Naive thymus-derived CD4-positive, alpha-beta T cell (primary cell): ENCODE measurements at regions of chr17 and their contacts with region 1.

Region 1: DNA sequence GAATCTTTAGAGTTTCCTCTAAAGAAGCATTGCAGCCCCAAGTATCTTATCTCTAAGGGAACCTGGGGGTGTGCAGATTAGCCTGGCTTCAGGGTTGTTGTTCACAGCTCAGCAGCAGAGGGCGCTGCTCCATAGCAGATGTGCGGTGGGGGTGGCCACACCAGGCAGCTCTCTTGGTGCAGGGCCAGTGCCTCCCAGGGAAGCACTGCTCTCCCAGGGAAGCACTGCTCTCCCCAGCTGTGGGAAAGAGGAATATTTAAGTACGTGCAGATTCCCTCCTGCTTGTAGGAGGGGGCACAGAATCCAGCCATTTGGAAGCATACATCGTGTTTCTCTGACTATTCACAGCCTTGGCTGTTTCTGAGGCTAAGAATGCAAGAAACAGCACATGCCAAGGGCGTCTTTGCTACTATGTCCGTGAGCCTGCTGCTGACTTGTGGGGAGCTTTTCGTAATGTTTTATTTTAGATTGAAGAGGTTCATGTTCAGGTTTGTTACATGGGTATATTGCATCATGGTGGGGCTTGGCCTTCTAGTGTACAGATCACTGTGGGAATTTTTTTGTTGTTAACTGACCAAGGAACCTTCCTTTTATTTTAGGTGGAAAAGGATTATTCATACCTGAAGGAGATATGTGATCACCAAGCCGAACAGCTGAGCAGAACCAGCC is 217.8 kb downstream of the SPECC1 start:
- DNase-seq: peak; percentile 68 to 87 (median 79)
- ATAC-seq: peak; percentile 100
- H3K4me3 ChIP-seq: no peak overlapping the region
- H3K4me3 Mint-ChIP-seq: peak overlapping the region in 6 of 10 donors; percentile 3 to 61 (median 29)
- H3K27ac ChIP-seq: no peak overlapping the region
- H3K27ac Mint-ChIP-seq: peak overlapping the region in 5 of 9 donors; percentile 2 to 81 (median 50)
- H3K4me1 ChIP-seq: peaks cover 0 to 9% of the 10 kb centered on the region in 2 donors
- H3K4me1 Mint-ChIP-seq: peaks cover 19 to 49% (median 35%) of the 10 kb centered on the region in 7 donors
- H3K27me3 ChIP-seq: no peaks in the 10 kb centered on the region
- H3K27me3 Mint-ChIP-seq: peaks cover 0 to 6% (median 0%) of the 10 kb centered on the region in 5 donors

Region 2: DNA sequence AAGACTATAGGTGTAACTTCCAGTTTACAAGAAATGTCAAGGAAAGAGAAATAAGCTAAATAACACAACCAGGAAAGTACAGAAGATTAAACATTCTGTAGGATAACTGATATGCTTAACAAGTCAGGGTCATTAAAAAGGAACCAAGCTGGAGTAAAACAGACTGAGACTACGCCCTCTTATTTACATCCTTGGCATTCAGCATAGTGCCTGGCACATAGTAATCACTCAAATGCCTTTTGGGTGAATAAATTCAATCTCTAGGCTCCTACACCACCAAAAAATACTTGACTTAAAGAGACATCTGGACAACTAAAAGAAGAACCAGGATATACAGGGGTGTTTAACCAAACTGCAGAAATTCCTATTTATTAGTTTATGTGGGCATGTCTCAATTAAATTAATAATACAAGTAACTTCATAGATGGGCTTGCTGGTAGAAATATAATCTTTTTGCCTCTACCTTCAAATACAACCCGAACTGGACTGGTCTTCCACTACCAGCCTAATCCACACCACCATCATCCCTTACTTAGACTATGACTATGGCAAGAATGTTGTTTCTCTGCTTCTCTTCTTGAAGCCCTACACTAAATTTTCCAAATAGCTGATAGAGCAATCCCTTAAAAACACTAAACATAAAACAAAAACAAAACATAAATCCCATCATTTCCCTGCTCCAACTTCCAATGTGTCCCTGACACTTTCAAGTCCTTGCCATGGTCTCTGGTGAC is 311.5 kb before region 1 on chr17:
- CTCF ChIA-PET with region 1: no interaction called
- POLR2A ChIA-PET with region 1: no interaction called
- intact Hi-C with region 1: no loop called
- DNase-seq: no peak
- ATAC-seq: no peak
- H3K4me3 ChIP-seq: no peak overlapping the region
- H3K4me3 Mint-ChIP-seq: no peak overlapping the region
- H3K27ac ChIP-seq: no peak overlapping the region
- H3K27ac Mint-ChIP-seq: peak overlapping the region in 5 of 9 donors; percentile 10 to 48 (median 28)
- H3K4me1 ChIP-seq: no peaks in the 10 kb centered on the region
- H3K4me1 Mint-ChIP-seq: peaks cover 2 to 18% (median 14%) of the 10 kb centered on the region in 7 donors
- H3K27me3 ChIP-seq: no peaks in the 10 kb centered on the region
- H3K27me3 Mint-ChIP-seq: no peaks in the 10 kb centered on the region

Region 3: DNA sequence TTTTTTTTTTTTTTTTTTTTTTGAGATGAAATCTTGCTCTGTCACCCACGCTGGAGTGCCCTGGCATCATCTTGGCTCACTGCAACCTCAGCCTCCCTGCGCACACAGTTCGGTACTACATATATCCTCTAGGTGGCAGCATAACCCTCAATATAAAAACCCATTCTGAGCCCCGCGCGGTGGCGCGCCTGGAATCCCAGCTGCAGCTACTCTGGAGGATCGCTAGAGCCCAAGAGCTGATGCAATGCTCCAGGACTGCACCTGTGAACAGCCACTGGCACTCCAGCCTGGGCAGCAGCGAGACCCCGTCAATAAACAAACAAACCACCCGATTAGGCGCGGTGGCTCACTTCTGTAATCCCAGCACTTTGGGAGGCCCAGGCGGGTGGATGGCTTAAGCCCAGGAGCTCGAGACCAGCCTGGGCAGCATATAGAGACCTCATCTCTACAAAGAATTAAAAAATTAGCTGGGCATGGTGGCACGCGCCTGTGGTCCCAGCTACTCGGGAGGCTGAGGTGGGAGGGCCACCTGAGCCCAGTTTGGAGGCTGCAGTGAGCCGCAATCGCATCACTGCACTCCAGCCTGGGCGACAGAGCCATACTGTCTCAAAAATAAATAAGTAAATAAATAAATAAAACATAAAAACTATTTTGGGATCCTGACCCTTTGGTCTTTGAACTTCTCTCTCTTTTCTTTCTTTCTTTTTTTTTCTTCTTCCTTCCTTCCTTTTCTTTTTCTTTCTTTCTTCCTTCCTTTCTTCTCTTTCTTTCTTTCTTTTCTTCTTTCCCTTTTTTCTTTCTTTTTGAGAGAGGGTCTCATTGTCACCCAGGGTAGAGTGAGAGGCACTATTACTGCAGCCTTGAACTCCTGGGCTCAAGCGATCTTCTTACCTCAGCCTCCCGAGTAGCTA is 233.9 kb before region 1 on chr17:
- CTCF ChIA-PET with region 1: interaction called, 3 read pairs
- POLR2A ChIA-PET with region 1: no interaction called
- intact Hi-C with region 1: loop called in 1 of 2 experiments (anchors 2 kb)
- DNase-seq: peak; percentile 52 to 79 (median 74)
- ATAC-seq: peak; percentile 100
- H3K4me3 ChIP-seq: no peak overlapping the region
- H3K4me3 Mint-ChIP-seq: peak overlapping the region in 7 of 10 donors; percentile 23 to 62 (median 56)
- H3K27ac ChIP-seq: no peak overlapping the region
- H3K27ac Mint-ChIP-seq: peak overlapping the region in 2 of 9 donors; percentile 14 to 36
- H3K4me1 ChIP-seq: no peaks in the 10 kb centered on the region
- H3K4me1 Mint-ChIP-seq: peaks cover 0 to 11% (median 9%) of the 10 kb centered on the region in 7 donors
- H3K27me3 ChIP-seq: no peaks in the 10 kb centered on the region
- H3K27me3 Mint-ChIP-seq: peaks cover 0 to 22% (median 15%) of the 10 kb centered on the region in 5 donors

Region 4: DNA sequence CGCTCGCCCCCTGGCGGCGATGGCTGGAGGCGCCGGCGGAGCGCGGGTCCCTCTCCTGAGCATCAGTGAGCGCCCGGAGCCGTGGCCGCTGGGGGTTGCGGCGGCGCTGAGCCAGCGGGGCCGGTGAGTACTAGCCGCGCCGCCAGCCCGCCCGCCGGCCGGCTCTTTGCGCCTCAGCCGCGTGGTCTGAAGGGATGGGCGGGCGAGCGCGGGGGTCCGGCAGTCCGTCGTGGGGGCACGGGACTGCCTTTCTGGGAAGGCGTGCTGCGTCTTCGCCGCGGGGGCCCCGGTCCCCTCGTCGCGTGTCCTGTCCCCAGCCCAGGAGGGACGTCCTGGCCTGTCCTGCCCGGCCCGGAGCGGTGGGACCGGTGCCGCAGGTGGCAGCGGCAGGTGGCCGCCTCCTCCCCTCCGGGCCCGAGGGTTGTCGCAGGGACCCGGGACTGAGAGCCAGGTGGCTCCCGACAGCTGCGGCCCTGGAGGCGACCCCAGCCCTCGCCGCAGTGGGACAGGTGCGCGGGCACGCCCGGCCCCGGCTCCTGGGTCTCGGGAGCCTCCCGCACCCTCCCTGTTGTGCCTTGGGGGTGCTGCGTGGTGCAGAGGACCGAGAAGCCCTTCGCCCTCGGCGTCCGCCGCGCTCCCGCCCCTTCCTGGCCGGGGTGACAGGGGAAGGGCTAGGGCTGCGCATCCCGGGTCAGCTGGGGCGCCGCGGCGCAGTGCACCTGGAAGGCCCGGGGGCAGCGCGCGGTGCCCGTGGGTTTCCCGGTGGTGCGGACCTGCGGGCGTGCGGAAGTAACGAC is 217.4 kb before region 1 on chr17 and contains the start of gene SPECC1:
- CTCF ChIA-PET with region 1: interaction called, 3 read pairs
- POLR2A ChIA-PET with region 1: no interaction called
- intact Hi-C with region 1: loop called in 1 of 2 experiments (anchors 10 kb)
- DNase-seq: peak in 8 of 9 donors; percentile 7 to 95 (median 87)
- ATAC-seq: peak; percentile 100
- H3K4me3 ChIP-seq: peak within 1 kb of the TSS; percentile 85
- H3K4me3 Mint-ChIP-seq: peak within 1 kb of the TSS; percentile 86 to 97 (median 90)
- H3K27ac ChIP-seq: no peak within 1 kb of the TSS
- H3K27ac Mint-ChIP-seq: peak within 1 kb of the TSS in 5 of 9 donors; percentile 25 to 58 (median 44)
- H3K4me1 ChIP-seq: no peaks in the 10 kb centered on the region
- H3K4me1 Mint-ChIP-seq: peaks cover 6 to 17% (median 14%) of the 10 kb centered on the region in 7 donors
- H3K27me3 ChIP-seq: peaks cover 0 to 3% of the 10 kb centered on the region in 2 donors
- H3K27me3 Mint-ChIP-seq: peaks cover 60 to 72% (median 69%) of the 10 kb centered on the region in 5 donors
- total RNA-seq, gene SPECC1: 1.2 to 37.5 (median 5.7) TPM

Region 5: DNA sequence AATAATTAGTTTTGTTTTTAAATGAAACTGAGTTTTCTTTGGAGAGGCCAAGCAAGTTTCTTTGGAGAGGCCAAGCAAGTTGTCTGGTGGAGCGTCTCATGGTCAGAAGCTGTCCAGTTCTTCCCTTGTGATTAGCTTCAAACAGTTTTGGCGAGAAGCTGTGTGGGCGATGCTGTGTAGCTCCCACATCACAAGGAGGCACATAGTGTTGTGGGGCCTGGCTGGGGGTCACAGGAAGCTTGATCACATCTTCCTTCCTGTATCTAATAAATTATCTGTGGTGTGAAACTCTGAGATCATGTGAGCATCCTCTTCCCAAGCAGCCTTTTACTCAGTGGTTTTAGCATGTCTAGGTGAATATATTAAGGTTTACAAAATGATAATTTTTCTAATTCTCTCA is 183.9 kb before region 1 on chr17:
- CTCF ChIA-PET with region 1: no interaction called
- POLR2A ChIA-PET with region 1: no interaction called
- intact Hi-C with region 1: no loop called
- DNase-seq: no peak
- ATAC-seq: peak; percentile 54
- H3K4me3 ChIP-seq: no peak overlapping the region
- H3K4me3 Mint-ChIP-seq: no peak overlapping the region
- H3K27ac ChIP-seq: no peak overlapping the region
- H3K27ac Mint-ChIP-seq: no peak overlapping the region
- H3K4me1 ChIP-seq: peaks cover 0 to 20% of the 10 kb centered on the region in 2 donors
- H3K4me1 Mint-ChIP-seq: peaks cover 0 to 14% (median 0%) of the 10 kb centered on the region in 7 donors
- H3K27me3 ChIP-seq: no peaks in the 10 kb centered on the region
- H3K27me3 Mint-ChIP-seq: peaks cover 0 to 21% (median 12%) of the 10 kb centered on the region in 5 donors

Region 6: DNA sequence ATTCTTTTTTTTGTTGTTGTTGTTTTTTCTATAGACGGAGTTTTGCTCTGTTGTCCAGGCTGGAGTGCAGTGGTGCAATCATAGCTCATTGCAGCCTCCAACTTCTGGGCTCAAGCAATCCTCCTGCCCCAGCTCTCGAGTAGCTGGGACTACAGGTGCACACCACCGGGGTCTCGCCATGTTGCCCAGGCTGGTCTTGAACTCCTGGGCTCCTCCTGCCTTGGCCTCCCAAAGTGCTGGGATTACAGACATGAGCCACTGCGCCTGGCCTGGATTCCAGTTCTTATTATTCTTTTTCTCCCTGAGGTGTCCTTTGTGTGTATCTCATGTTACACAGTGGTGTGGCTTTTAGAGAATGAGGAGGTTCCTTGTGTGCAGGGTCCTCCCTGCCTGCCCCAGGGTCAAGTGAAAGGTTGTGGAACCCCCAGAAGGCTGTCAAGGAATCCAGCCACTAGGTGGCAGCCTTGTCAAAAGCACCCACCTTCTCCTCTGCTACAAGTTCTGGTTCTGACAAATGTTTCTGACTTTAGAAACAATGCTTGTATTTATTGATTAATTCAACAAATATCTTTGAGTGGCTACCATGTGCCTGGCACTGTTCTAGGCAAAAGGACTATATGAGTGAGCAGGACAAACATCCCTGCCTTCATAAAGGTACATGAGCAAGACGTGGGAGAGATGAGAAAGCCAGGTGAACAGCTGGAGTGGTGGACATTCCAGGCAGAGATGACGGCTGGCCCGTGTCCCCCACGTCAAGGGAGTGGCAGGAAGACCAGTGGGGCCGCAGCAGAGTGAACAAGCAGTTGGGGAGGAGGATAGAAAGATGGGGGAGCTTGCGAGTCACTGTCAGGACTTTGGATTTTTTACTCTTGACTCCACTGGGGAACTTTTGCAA is 105.3 kb before region 1 on chr17:
- CTCF ChIA-PET with region 1: interaction called, 22 read pairs
- POLR2A ChIA-PET with region 1: no interaction called
- intact Hi-C with region 1: loop called (anchors 1 kb)
- DNase-seq: peak; percentile 42 to 71 (median 64)
- ATAC-seq: peak; percentile 80
- H3K4me3 ChIP-seq: no peak overlapping the region
- H3K4me3 Mint-ChIP-seq: no peak overlapping the region
- H3K27ac ChIP-seq: no peak overlapping the region
- H3K27ac Mint-ChIP-seq: no peak overlapping the region
- H3K4me1 ChIP-seq: no peaks in the 10 kb centered on the region
- H3K4me1 Mint-ChIP-seq: peaks cover 0 to 3% (median 0%) of the 10 kb centered on the region in 7 donors
- H3K27me3 ChIP-seq: no peaks in the 10 kb centered on the region
- H3K27me3 Mint-ChIP-seq: peaks cover 0 to 18% (median 0%) of the 10 kb centered on the region in 5 donors

Region 7: DNA sequence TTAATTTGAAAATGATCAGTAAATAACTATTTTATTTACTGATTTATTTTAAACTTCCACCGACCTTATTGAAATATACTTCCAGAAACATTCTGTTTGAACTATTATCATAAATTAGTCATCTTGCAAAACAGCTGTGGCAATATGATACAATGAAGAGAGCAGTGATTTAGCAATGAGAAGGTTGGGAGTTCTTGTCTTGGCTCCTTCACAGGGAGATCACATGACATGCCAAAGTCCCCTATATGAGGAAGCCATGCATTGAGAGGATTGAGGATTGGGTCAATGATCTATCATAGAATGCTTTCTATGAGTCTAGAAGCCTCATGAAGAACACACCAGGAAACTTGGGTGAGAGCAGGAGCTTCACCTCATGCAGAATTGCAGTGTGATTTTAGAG is 17.7 kb after region 1 on chr17:
- CTCF ChIA-PET with region 1: interaction called, 39 read pairs
- POLR2A ChIA-PET with region 1: interaction called, 3 read pairs
- intact Hi-C with region 1: no loop called
- DNase-seq: no peak
- ATAC-seq: no peak
- H3K4me3 ChIP-seq: no peak overlapping the region
- H3K4me3 Mint-ChIP-seq: peak overlapping the region in 1 of 10 donors; percentile 30
- H3K27ac ChIP-seq: no peak overlapping the region
- H3K27ac Mint-ChIP-seq: peak overlapping the region in 2 of 9 donors; percentile 17 to 38
- H3K4me1 ChIP-seq: peaks cover 0 to 37% of the 10 kb centered on the region in 2 donors
- H3K4me1 Mint-ChIP-seq: peaks cover 19 to 64% (median 59%) of the 10 kb centered on the region in 7 donors
- H3K27me3 ChIP-seq: no peaks in the 10 kb centered on the region
- H3K27me3 Mint-ChIP-seq: no peaks in the 10 kb centered on the region

Region 8: GRCh38 chr17:20276421-20276820 is 49.5 kb after region 1 on chr17:
- CTCF ChIA-PET with region 1: interaction called, 15 read pairs
- POLR2A ChIA-PET with region 1: interaction called, 5 read pairs
- intact Hi-C with region 1: loop called in 1 of 2 experiments (anchors 5 kb)
- DNase-seq: peak in 1 of 9 donors; percentile 23
- ATAC-seq: peak; percentile 19
- H3K4me3 ChIP-seq: no peak overlapping the region
- H3K4me3 Mint-ChIP-seq: peak overlapping the region; percentile 59 to 86 (median 72)
- H3K27ac ChIP-seq: peak overlapping the region; percentile 68
- H3K27ac Mint-ChIP-seq: peak overlapping the region; percentile 56 to 98 (median 95)
- H3K4me1 ChIP-seq: peaks cover under 1 to 69% of the 10 kb centered on the region in 2 donors
- H3K4me1 Mint-ChIP-seq: peaks cover 57 to 99% (median 93%) of the 10 kb centered on the region in 7 donors
- H3K27me3 ChIP-seq: no peaks in the 10 kb centered on the region
- H3K27me3 Mint-ChIP-seq: no peaks in the 10 kb centered on the region

Region 9: DNA sequence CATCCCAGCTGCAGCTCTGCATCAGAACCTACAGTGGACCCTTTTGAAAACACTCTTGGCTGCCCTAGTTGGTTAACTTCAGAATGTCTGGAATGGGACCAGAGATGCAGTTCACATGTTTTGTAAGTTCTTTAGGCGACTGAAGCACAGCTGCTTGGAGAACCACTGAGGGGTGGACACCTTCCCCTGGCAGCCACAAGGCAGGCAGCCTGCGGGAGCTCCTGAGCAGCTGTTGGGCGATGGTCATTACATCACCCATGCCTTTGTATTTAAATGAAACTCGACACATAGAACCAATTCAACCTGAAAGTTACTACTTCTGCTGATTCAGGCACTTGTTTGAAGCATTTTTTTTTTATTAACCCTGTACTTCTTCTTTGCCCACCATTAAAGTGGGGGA is 88.9 kb after region 1 on chr17:
- CTCF ChIA-PET with region 1: interaction called, 49 read pairs
- POLR2A ChIA-PET with region 1: interaction called, 6 read pairs
- intact Hi-C with region 1: loop called (anchors 1 kb)
- DNase-seq: no peak
- ATAC-seq: no peak
- H3K4me3 ChIP-seq: no peak overlapping the region
- H3K4me3 Mint-ChIP-seq: no peak overlapping the region
- H3K27ac ChIP-seq: no peak overlapping the region
- H3K27ac Mint-ChIP-seq: no peak overlapping the region
- H3K4me1 ChIP-seq: no peaks in the 10 kb centered on the region
- H3K4me1 Mint-ChIP-seq: peaks cover 0 to 5% (median 1%) of the 10 kb centered on the region in 7 donors
- H3K27me3 ChIP-seq: no peaks in the 10 kb centered on the region
- H3K27me3 Mint-ChIP-seq: peaks cover 0 to 2% (median 0%) of the 10 kb centered on the region in 5 donors

Region 10: DNA sequence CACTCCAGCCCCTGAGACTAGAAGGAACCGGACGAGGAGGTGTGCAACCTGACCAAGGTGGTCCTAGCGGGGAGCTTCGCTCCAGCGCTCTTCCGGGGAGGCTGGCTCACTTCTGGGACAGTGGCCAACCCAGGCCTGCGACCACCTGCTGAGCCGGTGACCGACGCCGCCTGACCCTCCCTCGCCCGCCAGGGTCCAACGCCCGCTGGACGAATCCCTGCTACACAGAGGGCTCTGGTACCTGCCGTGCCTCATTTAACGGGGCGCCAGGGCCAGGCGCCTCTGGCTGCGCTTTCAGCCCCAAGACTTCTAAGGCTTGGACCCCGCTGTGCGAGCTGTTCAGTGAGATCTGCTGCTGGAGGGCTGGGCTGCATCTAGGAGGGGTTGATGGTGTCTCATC is 1365.8 kb after region 1 on chr17:
- CTCF ChIA-PET with region 1: no interaction called
- POLR2A ChIA-PET with region 1: no interaction called
- intact Hi-C with region 1: no loop called
- DNase-seq: no peak
- ATAC-seq: no peak
- H3K4me3 ChIP-seq: no peak overlapping the region
- H3K4me3 Mint-ChIP-seq: no peak overlapping the region
- H3K27ac ChIP-seq: no peak overlapping the region
- H3K27ac Mint-ChIP-seq: no peak overlapping the region
- H3K4me1 ChIP-seq: no peaks in the 10 kb centered on the region
- H3K4me1 Mint-ChIP-seq: no peaks in the 10 kb centered on the region
- H3K27me3 ChIP-seq: no peaks in the 10 kb centered on the region
- H3K27me3 Mint-ChIP-seq: peaks cover 8 to 26% (median 17%) of the 10 kb centered on the region in 5 donors